HEK293 (cell line): ENCODE measurements at regions of chr16 and their contacts with region 1.

Region 1: DNA sequence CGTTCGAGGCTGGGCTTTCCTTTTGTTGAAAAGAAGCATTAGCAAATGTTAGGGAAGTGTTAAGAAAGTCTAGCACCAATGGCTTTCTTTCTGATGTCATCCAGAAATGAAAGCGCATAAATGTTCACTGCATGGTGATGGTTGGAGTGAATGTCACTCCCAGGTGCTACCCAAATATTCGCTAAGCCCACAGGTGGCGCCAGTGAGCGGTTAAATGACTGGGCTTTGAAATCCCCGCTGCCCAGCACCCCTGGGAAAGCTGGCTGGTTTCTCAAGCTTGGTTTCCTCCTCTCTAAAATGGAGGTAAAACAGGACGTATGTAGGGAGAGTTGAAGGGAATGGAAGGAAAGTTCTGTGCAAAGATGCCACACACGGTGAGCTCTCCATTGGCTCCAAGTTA is 104.4 kb downstream of the IRX5 start:
- H3K4me3 ChIP-seq: no peak overlapping the region
- H3K27ac ChIP-seq: no peak overlapping the region
- H3K4me1 ChIP-seq: no peaks in the 10 kb centered on the region
- CTCF ChIP-seq: no peak

Region 2: DNA sequence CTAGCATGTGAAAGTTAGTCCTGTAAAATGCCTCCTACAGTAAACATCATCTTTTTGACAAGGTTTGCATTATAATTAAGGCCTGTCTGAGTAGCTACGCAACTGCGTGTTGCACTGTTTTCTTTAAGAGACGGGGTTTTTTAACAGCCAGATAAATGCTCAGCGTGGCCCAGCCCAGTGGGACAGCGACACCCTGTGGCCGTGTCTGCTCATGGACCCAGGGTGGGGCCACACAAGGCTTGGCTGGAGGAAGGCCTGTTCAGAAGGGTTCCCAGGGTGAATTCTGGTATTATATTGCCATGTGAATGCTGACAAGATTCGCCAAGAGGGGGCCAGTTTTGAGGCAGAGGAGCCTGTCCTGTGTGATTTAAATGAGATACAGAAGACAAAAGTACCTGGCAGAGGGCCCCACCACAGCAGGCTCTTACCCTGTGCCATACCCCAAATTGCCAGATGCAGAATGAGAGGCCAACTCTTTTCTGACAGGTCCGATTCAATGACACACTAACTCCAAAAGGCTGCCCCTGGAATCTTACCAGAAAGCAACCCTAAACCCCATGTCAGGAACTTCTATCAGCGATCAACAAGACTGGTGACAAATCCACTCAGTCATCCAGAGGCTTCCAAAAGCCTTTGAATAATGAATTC is 223.1 kb after region 1 on chr16:
- CTCF ChIA-PET with region 1: interaction called, 12 read pairs
- POLR2A ChIA-PET with region 1: no interaction called
- H3K4me3 ChIP-seq: no peak overlapping the region
- H3K27ac ChIP-seq: no peak overlapping the region
- H3K4me1 ChIP-seq: no peaks in the 10 kb centered on the region
- CTCF ChIP-seq: no peak